PC-9 (cell line): ENCODE measurements at regions of chr20 and their contacts with region 1.

Region 1: GRCh38 chr20:47620808-47621805 is 119.4 kb downstream of the NCOA3 start:
- DNase-seq: peak; percentile 26 to 61
- H3K4me3 ChIP-seq: no peak overlapping the region
- H3K27ac ChIP-seq: peak overlapping the region; percentile 54
- H3K4me1 ChIP-seq: peaks cover 16% of the 10 kb centered on the region
- H3K27me3 ChIP-seq: no peaks in the 10 kb centered on the region
- CTCF ChIP-seq: peak; percentile 96

Region 2: DNA sequence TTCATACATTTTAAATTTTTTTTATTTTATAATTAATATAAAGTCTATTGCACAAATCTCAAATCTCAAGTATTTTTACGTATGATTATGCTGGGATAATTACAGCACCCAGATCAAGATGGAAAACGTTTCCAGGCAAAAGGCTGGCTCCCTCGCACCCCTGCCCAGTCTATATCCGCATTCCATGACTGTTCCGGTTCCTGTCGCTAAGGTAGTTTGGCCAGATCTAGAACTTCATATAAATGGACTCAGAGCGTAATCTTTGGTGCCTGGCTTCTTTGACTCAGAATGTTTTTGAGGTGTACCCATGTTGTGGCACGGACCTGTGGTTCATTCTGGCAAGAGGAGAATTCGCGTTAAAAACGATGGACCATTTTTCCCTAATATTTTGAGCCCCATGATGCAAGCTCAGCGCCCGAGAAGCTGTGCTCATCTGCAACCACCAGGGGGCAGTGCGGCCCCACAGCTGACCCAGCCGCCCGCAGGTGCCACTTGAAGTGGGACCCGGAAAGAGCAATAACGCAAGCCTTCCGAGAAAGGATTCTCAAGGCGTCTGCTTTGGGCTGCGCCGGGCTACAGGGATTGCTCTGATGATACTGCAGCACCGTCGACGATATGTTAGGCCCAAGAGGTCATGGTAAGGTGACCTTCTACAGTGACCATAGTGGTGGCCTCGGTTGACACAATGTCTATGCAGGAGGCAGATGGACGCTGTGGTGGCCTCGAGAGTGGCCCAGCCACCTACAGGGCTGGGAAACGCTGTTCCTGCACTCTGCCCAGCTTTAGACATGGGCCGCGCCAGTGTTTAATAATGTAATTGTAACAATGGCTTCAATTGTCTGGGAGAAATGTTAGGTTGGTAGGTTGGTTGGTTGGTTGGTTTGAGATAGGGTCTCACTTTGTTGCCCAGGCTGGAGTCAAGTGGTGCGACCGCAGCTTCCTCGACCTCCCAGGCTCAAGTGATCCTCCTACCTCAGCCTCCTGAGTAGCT is 424.7 kb before region 1 on chr20:
- CTCF ChIA-PET with region 1: no interaction called
- POLR2A ChIA-PET with region 1: no interaction called
- intact Hi-C with region 1: loop called (anchors 1 kb)
- DNase-seq: peak; percentile 72 to 82
- H3K4me3 ChIP-seq: no peak overlapping the region
- H3K27ac ChIP-seq: no peak overlapping the region
- H3K4me1 ChIP-seq: 0 out of 2 replicates have a peak, but pooled peaks cover 10% of the 10 kb centered on the region
- H3K27me3 ChIP-seq: no peaks in the 10 kb centered on the region
- CTCF ChIP-seq: peak; percentile 99

Region 3: DNA sequence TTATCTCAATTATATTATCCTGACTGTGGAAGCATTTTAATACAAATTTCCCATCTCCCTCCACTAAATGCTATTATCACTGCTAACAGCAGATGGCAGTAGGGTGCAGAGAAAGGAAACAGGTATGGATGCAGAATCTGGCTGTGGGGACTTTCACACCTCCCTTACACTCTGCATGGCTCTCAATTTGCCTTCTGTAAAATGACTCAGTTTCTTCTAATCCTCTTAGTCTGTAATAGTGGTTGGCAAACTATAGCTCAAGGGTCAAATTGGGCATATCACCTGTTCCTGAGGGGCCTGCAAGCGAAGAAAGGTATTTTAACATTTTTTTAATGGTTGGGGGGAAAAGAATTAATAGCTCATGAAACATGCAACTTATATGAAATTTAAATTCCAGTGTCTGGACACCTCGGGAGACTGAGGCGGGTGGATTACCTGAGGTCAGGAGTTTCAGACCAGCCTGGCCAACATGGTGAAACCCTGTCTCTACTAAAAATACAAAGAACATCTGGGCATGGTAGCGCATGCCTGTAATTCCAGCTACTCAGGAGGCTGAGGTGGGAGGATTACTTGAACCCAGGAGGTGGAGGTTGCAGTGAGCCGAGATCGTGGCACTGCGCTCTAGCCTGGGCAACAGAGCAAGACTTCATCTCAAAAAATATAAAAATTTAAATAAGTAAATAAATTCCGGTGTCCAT is 348.1 kb before region 1 on chr20:
- CTCF ChIA-PET with region 1: interaction called, 10 read pairs
- POLR2A ChIA-PET with region 1: interaction called, 4 read pairs
- intact Hi-C with region 1: loop called (anchors 1 kb)
- DNase-seq: peak; percentile 53 to 58
- H3K4me3 ChIP-seq: no peak overlapping the region
- H3K27ac ChIP-seq: no peak overlapping the region
- H3K4me1 ChIP-seq: peaks cover 40% of the 10 kb centered on the region
- H3K27me3 ChIP-seq: no peaks in the 10 kb centered on the region
- CTCF ChIP-seq: peak; percentile 97

Region 4: GRCh38 chr20:47464380-47465101 is 156.6 kb before region 1 on chr20:
- CTCF ChIA-PET with region 1: interaction called, 3 read pairs
- POLR2A ChIA-PET with region 1: interaction called, 5 read pairs
- intact Hi-C with region 1: loop called (anchors 1 kb)
- DNase-seq: peak; percentile 79 to 99
- H3K4me3 ChIP-seq: no peak overlapping the region; the same call in 1 of the 2 replicates
- H3K27ac ChIP-seq: peak overlapping the region; percentile 73
- H3K4me1 ChIP-seq: peaks cover 29% of the 10 kb centered on the region
- H3K27me3 ChIP-seq: no peaks in the 10 kb centered on the region
- CTCF ChIP-seq: peak; percentile 78

Region 5: DNA sequence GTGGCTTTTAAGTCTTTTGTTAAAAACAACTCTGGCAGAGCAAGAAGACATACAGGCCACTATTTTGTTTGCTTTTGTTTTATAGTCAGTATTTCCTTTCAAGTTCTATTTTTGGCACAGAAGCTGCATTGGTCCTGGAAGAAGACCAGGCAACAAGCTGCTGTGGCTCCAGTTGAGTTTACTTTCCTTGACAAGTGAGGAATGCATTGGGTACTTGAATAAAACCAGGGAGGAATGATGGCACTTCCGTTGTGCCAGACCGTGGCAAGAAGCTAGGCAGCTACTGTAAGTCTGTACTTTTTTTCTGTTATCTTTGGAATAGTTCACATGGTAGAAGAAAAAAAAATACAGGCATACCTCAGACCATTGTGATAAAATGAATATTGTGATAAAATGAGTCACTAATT is 53.1 kb before region 1 on chr20:
- CTCF ChIA-PET with region 1: interaction called, 4 read pairs
- POLR2A ChIA-PET with region 1: no interaction called
- intact Hi-C with region 1: loop called (anchors 2 kb)
- DNase-seq: peak; percentile 71 to 83
- H3K4me3 ChIP-seq: no peak overlapping the region
- H3K27ac ChIP-seq: peak overlapping the region; percentile 61
- H3K4me1 ChIP-seq: peaks cover 58% of the 10 kb centered on the region
- H3K27me3 ChIP-seq: no peaks in the 10 kb centered on the region
- CTCF ChIP-seq: no peak

Region 6: DNA sequence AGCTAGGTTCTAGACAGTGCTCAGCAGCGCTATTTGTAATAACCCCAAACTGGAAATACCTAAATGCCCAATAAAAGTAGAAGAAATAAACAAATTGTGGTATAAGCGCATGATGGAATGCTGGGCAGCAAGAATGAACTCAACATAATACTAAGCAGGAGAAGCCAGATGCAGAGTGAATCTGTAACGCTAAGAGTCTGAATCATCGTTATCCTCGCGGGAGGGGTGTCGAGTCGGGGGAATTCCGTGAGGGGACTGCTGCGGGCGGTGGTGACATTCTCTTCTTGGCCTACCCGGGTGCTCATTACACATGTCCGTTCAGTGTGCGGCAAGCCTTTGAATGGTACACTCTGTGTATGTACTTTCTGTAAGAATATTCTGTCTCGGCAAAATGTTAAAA is 80.5 kb after region 1 on chr20:
- CTCF ChIA-PET with region 1: no interaction called
- POLR2A ChIA-PET with region 1: no interaction called
- intact Hi-C with region 1: no loop called
- DNase-seq: no peak
- H3K4me3 ChIP-seq: no peak overlapping the region
- H3K27ac ChIP-seq: no peak overlapping the region
- H3K4me1 ChIP-seq: no peaks in the 10 kb centered on the region
- H3K27me3 ChIP-seq: no peaks in the 10 kb centered on the region
- CTCF ChIP-seq: no peak